ENCODE measurements at regions of chr15 and their contacts with region 1.

Region 1: DNA sequence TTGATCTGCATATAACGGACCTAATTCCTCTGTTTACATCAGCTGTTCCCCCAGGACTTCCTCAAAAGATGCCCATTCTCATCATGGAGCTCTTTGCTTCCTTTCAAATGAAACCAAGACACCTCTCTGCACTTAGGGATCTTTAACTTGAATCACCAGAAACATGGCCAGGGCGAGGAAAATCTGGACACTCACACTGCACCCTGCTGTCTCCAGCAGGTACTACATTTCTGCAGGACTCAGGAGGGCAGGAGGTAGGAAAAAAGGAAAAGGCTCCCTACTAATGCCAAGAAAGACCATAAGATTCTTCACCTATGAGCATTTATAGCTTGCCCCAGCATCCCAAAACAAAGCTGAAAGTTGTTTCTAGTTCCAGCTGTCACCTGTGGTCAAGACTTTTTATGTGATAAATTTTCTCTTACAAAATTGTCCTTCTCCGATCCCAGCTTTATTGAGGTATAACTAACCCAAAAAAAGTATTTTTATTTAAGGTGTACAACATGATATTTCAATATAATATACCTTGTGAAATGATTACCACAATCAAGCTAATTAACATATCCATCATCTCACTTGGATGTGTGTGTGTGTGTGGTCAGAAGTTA is 87.3 kb upstream of the C15orf61 start:
- DNase-seq: no peak
- H3K4me3 ChIP-seq: no peak overlapping the region
- CTCF ChIP-seq: peak; percentile 83

Region 2: GRCh38 chr15:67383899-67384298 is 49.7 kb before region 1 on chr15:
- CTCF ChIA-PET with region 1: interaction called, 12 read pairs
- POLR2A ChIA-PET with region 1: no interaction called
- DNase-seq: no peak
- H3K4me3 ChIP-seq: no peak overlapping the region
- CTCF ChIP-seq: no peak

Region 3: DNA sequence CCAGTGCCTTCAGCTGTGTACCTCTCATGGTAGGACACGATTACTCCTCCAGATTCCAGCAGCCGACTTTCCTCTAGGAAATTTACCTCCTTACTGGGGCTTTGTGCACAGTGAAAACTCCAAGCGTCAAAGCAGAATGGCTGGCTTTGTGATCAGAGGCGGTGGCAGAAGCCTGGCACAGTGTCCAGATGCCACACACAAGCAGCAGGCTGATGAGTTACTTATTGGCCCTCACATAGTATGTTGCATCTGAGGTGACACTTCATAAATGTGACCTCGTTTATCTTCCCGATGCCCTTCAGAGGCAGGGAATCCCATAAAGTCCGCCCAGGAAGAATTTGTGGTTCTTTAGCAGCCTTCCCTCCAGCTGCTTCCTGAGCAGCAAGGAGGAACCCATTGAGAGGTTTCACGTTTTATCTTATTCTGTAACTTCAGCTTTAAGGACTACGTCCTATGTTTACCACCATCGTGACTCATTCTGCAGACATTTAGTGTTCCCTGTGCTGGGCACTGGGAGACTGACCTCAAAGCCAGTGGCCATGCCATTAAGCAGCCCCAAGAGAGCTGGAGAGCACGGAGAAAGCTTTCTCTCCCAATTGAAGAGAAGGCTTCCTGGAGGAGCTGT is 19.7 kb before region 1 on chr15:
- CTCF ChIA-PET with region 1: interaction called, 21 read pairs
- POLR2A ChIA-PET with region 1: no interaction called
- DNase-seq: no peak
- H3K4me3 ChIP-seq: no peak overlapping the region
- CTCF ChIP-seq: no peak

Region 4: GRCh38 chr15:67444100-67444499 is 10.5 kb after region 1 on chr15:
- CTCF ChIA-PET with region 1: interaction called, 19 read pairs
- POLR2A ChIA-PET with region 1: no interaction called
- DNase-seq: no peak
- H3K4me3 ChIP-seq: no peak overlapping the region
- CTCF ChIP-seq: no peak

Measured in AG04449 (cell line).